ENCODE measurements at regions of chr21 and their contacts with region 1.

Region 1: DNA sequence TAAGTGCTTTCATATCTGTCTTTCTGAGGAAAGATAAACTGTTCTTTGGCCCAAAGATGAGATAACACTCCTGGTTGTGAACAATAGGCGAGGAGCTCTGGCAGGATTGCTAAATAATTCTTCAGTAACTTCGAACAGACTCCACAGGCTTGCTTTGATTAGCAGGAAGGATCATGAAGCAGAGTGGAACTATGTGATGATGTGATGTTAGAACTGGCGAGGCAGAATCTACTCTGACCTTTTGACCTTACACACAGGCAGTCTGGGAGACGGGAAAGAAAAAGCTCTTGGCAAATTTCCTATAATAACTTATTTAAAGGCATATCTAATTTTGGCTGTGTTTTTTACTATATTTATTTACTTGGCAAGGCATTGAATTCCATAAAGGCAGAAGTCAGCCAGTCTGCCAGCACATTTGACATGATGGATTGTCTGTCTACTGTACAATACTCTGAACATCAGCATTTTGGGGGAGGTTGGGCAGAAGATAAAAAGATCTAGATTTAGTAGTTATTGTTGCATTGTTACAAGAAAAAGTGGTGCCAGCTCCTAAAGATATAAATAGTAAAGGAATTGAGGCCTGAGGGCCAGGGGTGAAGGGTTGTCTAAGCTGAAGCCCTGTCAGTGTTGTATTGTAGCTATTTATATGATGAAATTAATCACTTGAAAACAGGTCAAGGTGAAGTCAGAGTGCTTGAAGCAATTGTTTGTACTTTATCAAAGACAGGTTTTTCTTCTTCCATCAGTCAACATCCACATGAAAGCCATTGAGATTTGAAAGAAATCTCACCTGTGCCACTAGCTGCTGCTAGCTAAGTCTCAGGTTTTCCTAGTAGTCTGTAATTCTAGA is 708.8 kb downstream of the LTN1 start:
- DNase-seq: peak; percentile 97
- H3K4me3 ChIP-seq: peak overlapping the region in 1 of 3 experiments; percentile 17
- H3K27ac ChIP-seq: peak overlapping the region; percentile 79
- H3K4me1 ChIP-seq: peaks cover 21% of the 10 kb centered on the region
- H3K27me3 ChIP-seq: no peaks in the 10 kb centered on the region
- CTCF ChIP-seq: no peak
- POLR2A ChIP-seq: no peak

Region 2: GRCh38 chr21:28111151-28111619 is 172.7 kb before region 1 on chr21:
- CTCF ChIA-PET with region 1: interaction called, 4 read pairs
- POLR2A ChIA-PET with region 1: no interaction called
- dilution Hi-C with region 1: no loop called
- intact Hi-C with region 1: loop called (anchors 2 kb)
- DNase-seq: peak; percentile 85
- H3K4me3 ChIP-seq: peak overlapping the region in 1 of 3 experiments; percentile 46
- H3K27ac ChIP-seq: peak overlapping the region; percentile 1
- H3K4me1 ChIP-seq: peaks cover 14% of the 10 kb centered on the region
- H3K27me3 ChIP-seq: no peaks in the 10 kb centered on the region
- CTCF ChIP-seq: no peak
- POLR2A ChIP-seq: no peak

Region 3: GRCh38 chr21:28294051-28294450 is 10.2 kb after region 1 on chr21:
- CTCF ChIA-PET with region 1: interaction called, 3 read pairs
- POLR2A ChIA-PET with region 1: no interaction called
- dilution Hi-C with region 1: no loop called
- intact Hi-C with region 1: loop called (anchors 1 kb)
- DNase-seq: peak; percentile 57
- H3K4me3 ChIP-seq: no peak overlapping the region
- H3K27ac ChIP-seq: peak overlapping the region; percentile 72
- H3K4me1 ChIP-seq: peaks cover 34% of the 10 kb centered on the region
- H3K27me3 ChIP-seq: no peaks in the 10 kb centered on the region
- CTCF ChIP-seq: no peak
- POLR2A ChIP-seq: no peak

Region 4: DNA sequence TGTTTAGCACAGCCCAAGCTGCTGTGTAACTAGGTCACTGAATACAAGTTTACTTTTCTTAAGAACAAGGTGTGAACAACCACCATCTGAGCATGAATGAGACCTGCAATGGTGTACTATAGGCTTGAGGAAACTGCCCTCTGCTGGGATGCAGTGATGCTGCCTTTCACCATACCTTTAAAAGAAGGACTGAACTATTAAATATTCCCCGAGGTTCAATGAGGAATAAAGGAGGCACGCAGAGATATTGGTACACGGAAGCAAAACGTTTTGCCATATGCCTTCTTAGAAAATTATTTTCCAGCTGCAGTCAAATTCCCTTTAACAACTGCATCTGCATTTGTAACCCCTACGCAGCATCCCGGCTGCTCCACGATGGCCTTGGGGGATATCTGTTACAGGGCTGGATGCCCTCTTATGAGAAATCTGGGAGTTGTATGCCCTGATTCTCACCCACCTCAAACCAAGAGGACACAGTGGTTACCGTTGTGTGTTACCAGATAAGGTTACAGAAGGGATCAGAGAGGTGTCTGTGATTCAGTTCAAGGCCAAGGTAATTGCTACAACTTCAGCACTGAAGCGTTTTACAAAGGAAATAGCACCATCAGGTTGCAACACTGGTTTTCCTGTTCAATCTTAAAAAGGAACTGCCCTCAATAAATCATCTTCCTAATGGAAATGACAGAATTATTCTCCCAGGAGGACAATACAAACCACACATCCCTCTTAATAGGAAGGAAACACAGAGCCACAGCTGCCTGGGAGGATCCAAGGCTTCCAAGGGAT is 238.3 kb after region 1 on chr21:
- CTCF ChIA-PET with region 1: interaction called, 3 read pairs
- POLR2A ChIA-PET with region 1: no interaction called
- dilution Hi-C with region 1: no loop called
- intact Hi-C with region 1: loop called (anchors 1 kb)
- DNase-seq: peak; percentile 88
- H3K4me3 ChIP-seq: no peak overlapping the region
- H3K27ac ChIP-seq: peak overlapping the region; percentile 72
- H3K4me1 ChIP-seq: peaks cover 45% of the 10 kb centered on the region
- H3K27me3 ChIP-seq: no peaks in the 10 kb centered on the region
- CTCF ChIP-seq: peak; percentile 44 to 56
- POLR2A ChIP-seq: no peak

Region 5: DNA sequence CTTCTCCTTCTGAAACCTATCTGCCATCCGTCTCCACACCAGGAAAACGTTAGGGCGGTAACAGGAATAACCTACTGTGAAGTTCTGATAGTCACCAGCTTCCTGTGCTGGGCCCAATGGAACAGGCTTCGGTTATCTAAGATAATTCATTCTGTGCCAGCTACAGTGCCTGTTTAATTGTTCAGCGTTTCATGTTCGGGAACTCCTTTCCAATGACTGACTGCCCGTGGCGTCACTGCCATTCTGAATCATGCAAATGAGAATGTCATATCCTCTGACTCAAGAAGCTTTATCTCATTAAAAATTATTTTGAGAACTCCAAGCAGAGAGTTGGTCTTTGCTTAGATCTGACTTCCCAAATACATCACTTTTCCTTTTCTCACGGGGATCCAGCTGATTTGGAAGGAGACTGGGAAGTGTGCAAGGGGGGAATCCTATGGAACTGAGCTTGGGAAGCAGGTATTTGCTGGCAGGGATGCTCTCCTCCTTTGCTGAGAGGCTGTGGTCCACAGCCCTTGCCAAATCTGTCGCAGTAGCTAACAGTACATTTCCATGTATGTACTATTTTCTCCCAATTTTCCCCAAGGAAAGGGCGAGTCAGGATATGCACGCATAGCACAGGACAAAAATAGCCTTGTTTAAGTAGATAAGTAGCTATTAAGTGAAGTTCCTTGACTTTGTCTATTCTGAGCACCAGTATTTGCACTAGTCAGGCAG is 350.1 kb after region 1 on chr21:
- CTCF ChIA-PET with region 1: no interaction called
- POLR2A ChIA-PET with region 1: no interaction called
- dilution Hi-C with region 1: no loop called
- intact Hi-C with region 1: loop called (anchors 1 kb)
- DNase-seq: peak; percentile 94
- H3K4me3 ChIP-seq: peak overlapping the region in 1 of 3 experiments; percentile 1
- H3K27ac ChIP-seq: peak overlapping the region; percentile 97
- H3K4me1 ChIP-seq: peaks cover 59% of the 10 kb centered on the region
- H3K27me3 ChIP-seq: no peaks in the 10 kb centered on the region
- CTCF ChIP-seq: no peak
- POLR2A ChIP-seq: peak; percentile 12